OCI-LY7 (cell line): ENCODE measurements at regions of chr1 and their contacts with region 1.

Region 1: GRCh38 chr1:63442141-63442475 is 74.7 kb downstream of the ALG6 start:
- DNase-seq: no peak
- H3K4me3 ChIP-seq: no peak overlapping the region
- H3K27ac ChIP-seq: no peak overlapping the region
- H3K4me1 ChIP-seq: peaks cover 20% of the 10 kb centered on the region
- CTCF ChIP-seq: no peak

Region 2: GRCh38 chr1:63099188-63099587 is 342.9 kb before region 1 on chr1:
- CTCF ChIA-PET with region 1: no interaction called
- POLR2A ChIA-PET with region 1: no interaction called
- intact Hi-C with region 1: no loop called
- DNase-seq: no peak
- H3K4me3 ChIP-seq: no peak overlapping the region
- H3K27ac ChIP-seq: no peak overlapping the region
- H3K4me1 ChIP-seq: no peaks in the 10 kb centered on the region
- CTCF ChIP-seq: no peak

Region 3: GRCh38 chr1:63294803-63295594 is 147.1 kb before region 1 on chr1:
- CTCF ChIA-PET with region 1: no interaction called
- POLR2A ChIA-PET with region 1: no interaction called
- intact Hi-C with region 1: no loop called
- DNase-seq: no peak
- H3K4me3 ChIP-seq: no peak overlapping the region
- H3K27ac ChIP-seq: no peak overlapping the region
- H3K4me1 ChIP-seq: no peaks in the 10 kb centered on the region
- CTCF ChIP-seq: no peak

Region 4: DNA sequence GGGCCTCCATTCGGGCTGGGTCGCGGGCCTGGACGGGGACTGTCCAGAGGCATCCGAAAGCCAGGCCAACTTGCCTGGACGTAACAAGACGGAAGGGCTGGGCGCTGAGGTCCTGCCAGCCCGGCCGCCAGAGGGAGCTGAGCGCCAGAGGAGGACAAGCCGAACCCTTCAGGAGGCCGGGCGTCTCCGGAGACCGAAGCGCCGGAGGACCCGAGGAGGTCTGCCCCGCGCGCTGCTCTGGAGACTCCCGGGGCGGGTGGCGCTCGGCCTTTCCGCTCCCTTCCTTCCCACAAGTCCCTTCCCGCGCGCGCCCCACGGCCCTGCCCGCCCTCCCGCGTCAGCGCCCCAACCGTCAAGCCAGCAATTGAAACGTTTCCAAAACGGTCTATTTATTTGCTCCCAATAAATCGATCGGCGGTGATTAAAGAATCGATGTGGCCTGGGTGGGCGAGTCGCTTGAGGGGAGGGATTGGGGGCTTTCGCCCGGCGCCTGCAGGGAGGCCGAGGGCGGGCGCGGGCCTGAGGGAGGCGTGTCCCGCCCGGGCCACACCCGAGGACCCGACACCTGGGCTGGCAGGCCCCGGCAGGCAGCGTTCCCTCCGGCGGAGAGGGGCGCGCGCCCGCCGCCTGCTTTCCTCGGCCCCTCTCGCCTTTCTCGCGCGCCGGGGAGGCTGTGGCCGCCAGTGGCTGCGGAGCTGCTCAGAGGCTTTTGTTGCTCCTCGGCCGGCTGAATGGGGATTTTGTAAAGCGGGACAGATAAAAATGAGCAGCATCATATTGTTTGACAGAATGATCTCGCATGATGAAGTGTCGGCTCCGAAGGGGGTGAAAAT is 124.9 kb before region 1 on chr1:
- CTCF ChIA-PET with region 1: no interaction called
- POLR2A ChIA-PET with region 1: interaction called, 3 read pairs
- intact Hi-C with region 1: loop called (anchors 2 kb)
- DNase-seq: peak; percentile 86
- H3K4me3 ChIP-seq: peak overlapping the region; percentile 70
- H3K27ac ChIP-seq: no peak overlapping the region
- H3K4me1 ChIP-seq: peaks cover 14% of the 10 kb centered on the region
- CTCF ChIP-seq: peak; percentile 79

Region 5: GRCh38 chr1:63327417-63328139 is 114.5 kb before region 1 on chr1:
- CTCF ChIA-PET with region 1: no interaction called
- POLR2A ChIA-PET with region 1: interaction called, 5 read pairs
- intact Hi-C with region 1: loop called (anchors 1 kb)
- DNase-seq: peak; percentile 64
- H3K4me3 ChIP-seq: no peak overlapping the region
- H3K27ac ChIP-seq: no peak overlapping the region
- H3K4me1 ChIP-seq: no peaks in the 10 kb centered on the region
- CTCF ChIP-seq: peak; percentile 88

Region 6: GRCh38 chr1:63367215-63368103 is 74.6 kb before region 1 on chr1 and contains the start of gene ALG6:
- CTCF ChIA-PET with region 1: no interaction called
- POLR2A ChIA-PET with region 1: no interaction called
- intact Hi-C with region 1: loop called (anchors 2 kb)
- DNase-seq: peak; percentile 94
- H3K4me3 ChIP-seq: peak within 1 kb of the TSS; percentile 90
- H3K27ac ChIP-seq: peak within 1 kb of the TSS; percentile 37
- H3K4me1 ChIP-seq: peaks cover 6% of the 10 kb centered on the region
- CTCF ChIP-seq: no peak
- total RNA-seq, gene ALG6: 29.3 TPM in 2 replicates